Heart left ventricle (tissue), 16 donors: ENCODE measurements at regions of chr1 and their contacts with region 1.

Region 1: DNA sequence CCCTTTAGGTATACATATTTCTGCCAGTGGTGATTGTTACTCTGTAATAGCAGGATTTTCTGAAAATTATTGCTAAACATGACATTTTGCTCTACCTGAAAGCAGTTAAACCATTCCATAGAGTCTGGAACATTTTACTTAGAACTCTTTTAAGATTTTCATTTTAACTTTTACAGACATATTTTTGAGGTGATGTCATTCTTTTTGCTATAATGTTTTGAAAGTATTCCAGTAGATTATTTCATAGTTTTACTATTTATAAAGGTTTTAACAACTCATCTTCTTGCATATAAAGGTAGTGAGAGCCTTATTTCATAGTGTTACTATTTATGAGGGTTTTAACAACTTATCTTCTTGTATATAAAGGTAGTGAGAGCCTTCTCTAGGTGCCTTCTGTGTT is 42.9 kb downstream of the PTBP2 start:
- DNase-seq: no peak
- ATAC-seq: no peak
- H3K4me3 ChIP-seq: no peak overlapping the region
- H3K27ac ChIP-seq: peak overlapping the region in 1 of 12 donors; percentile 12
- H3K4me1 ChIP-seq: peaks cover 0 to 10% (median 0%) of the 10 kb centered on the region in 12 donors
- H3K27me3 ChIP-seq: no peaks in the 10 kb centered on the region
- CTCF ChIP-seq: no peak
- POLR2A ChIP-seq: no peak

Region 2: DNA sequence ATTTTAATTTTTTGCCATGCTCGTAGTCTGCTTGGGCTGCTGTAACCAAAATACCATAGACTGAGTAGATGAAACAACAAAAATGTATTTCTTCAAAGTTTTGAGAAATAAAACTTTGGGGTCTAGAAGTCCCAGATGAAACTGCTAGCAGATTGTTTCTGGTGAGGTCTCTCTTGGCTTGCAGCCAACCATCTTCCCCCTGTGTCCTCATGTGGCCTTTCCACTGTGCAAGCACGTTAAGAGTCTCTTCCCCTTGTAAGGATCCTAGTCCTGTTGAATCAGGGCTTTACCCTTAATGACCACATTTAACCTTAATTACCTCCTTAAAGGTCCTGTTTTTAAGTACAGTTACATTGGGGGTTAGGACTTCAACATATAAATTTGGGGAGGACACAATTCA is 43.7 kb after region 1 on chr1:
- intact Hi-C with region 1: loop called in 1 of 10 experiments (anchors 5 kb)
- DNase-seq: peak in 1 of 5 donors; percentile 32
- ATAC-seq: no peak
- H3K4me3 ChIP-seq: no peak overlapping the region
- H3K27ac ChIP-seq: no peak overlapping the region
- H3K4me1 ChIP-seq: peaks cover 0 to 21% (median 4%) of the 10 kb centered on the region in 12 donors
- H3K27me3 ChIP-seq: no peaks in the 10 kb centered on the region
- CTCF ChIP-seq: no peak
- POLR2A ChIP-seq: no peak